Activated CD8-positive, alpha-beta T cell treated with anti-CD3 and anti-CD28 coated beads, Interleukin-2, amount 10 ng/mL, durations not matched to agents 7 days and 5 days (primary cell): ENCODE measurements at regions of chr10 and their contacts with region 1.

Region 1: DNA sequence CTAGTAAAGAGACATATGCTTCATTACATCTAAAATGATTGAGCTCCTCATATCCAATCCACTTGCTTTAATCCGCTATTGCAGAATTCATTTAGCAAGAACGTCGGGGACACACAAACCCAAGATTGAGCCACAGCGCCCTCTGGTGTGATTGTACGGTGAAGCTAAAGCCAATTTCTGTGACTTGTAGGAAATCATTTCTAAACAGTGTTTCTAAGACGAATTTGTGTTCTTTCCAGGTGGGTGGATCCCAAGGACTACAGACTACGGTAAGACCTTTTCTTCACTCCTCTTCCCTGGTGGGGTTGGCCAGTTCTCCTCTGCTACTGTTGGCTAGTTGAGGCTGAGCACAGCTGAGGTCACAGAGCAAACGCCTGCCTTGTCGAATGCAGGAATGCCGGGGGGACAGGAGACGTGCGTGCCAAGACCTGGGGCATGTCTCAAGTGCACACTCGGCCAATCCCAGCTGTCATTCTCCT is 5.2 kb downstream of the DMBT1 start:
- DNase-seq: peak; percentile 82
- ATAC-seq: no peak
- H3K4me3 Mint-ChIP-seq: no peak overlapping the region
- H3K27ac Mint-ChIP-seq: no peak overlapping the region
- H3K4me1 Mint-ChIP-seq: peaks cover 5% of the 10 kb centered on the region
- H3K27me3 Mint-ChIP-seq: peaks cover 41% of the 10 kb centered on the region

Region 2: GRCh38 chr10:122298598-122299301 is 267.0 kb before region 1 on chr10:
- CTCF ChIA-PET with region 1: interaction called, 29 read pairs
- POLR2A ChIA-PET with region 1: no interaction called
- DNase-seq: peak; percentile 74
- ATAC-seq: peak; percentile 84
- H3K4me3 Mint-ChIP-seq: peak overlapping the region; percentile 15
- H3K27ac Mint-ChIP-seq: no peak overlapping the region
- H3K4me1 Mint-ChIP-seq: peaks cover 24% of the 10 kb centered on the region
- H3K27me3 Mint-ChIP-seq: peaks cover 22% of the 10 kb centered on the region

Region 3: GRCh38 chr10:122435212-122435827 is 130.4 kb before region 1 on chr10:
- CTCF ChIA-PET with region 1: interaction called, 31 read pairs
- POLR2A ChIA-PET with region 1: no interaction called
- DNase-seq: no peak
- ATAC-seq: peak; percentile 55
- H3K4me3 Mint-ChIP-seq: no peak overlapping the region
- H3K27ac Mint-ChIP-seq: no peak overlapping the region
- H3K4me1 Mint-ChIP-seq: no peaks in the 10 kb centered on the region
- H3K27me3 Mint-ChIP-seq: peaks cover 4% of the 10 kb centered on the region

Region 4: GRCh38 chr10:122504610-122504950 is 61.2 kb before region 1 on chr10:
- CTCF ChIA-PET with region 1: interaction called, 45 read pairs
- POLR2A ChIA-PET with region 1: no interaction called
- DNase-seq: no peak
- ATAC-seq: no peak
- H3K4me3 Mint-ChIP-seq: no peak overlapping the region
- H3K27ac Mint-ChIP-seq: no peak overlapping the region
- H3K4me1 Mint-ChIP-seq: no peaks in the 10 kb centered on the region
- H3K27me3 Mint-ChIP-seq: peaks cover 15% of the 10 kb centered on the region

Region 5: DNA sequence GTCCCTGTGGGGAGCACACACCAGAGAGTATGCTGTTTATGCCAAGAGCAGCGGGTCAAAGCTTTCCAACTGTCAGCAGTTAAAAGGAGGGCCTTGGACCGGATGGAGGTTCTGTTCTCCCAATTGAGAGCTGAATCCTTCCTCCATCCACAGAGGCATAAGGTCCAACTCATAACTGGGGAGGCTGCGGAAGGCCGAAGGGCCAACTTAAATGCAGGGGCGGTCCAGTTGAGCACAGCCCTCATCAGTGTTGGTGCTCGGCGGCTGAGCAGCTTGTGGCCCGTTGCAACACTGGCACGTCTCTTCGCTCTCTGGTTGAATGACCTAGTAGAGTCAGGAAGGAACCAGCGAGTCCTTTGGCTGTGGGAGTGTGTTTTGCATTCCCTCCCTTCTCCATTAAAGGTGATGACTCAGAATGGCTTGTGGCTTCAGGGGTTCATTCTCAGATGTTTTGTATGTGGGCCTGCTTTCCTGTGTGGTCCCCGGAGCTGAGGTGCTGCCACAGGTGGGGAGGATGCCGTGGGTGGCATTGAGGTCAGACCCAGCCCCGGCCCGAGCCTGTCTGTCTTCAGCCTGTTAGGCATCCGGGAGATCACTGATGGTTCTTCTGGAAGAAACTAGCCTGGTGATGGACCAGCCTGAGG is 50.1 kb before region 1 on chr10:
- CTCF ChIA-PET with region 1: interaction called, 71 read pairs
- POLR2A ChIA-PET with region 1: interaction called, 5 read pairs
- DNase-seq: peak; percentile 81
- ATAC-seq: peak; percentile 90
- H3K4me3 Mint-ChIP-seq: no peak overlapping the region
- H3K27ac Mint-ChIP-seq: peak overlapping the region; percentile 23
- H3K4me1 Mint-ChIP-seq: peaks cover 39% of the 10 kb centered on the region
- H3K27me3 Mint-ChIP-seq: peaks cover 21% of the 10 kb centered on the region

Region 6: GRCh38 chr10:122549636-122550035 is 16.1 kb before region 1 on chr10:
- CTCF ChIA-PET with region 1: interaction called, 14 read pairs
- POLR2A ChIA-PET with region 1: no interaction called
- DNase-seq: no peak
- ATAC-seq: no peak
- H3K4me3 Mint-ChIP-seq: no peak overlapping the region
- H3K27ac Mint-ChIP-seq: no peak overlapping the region
- H3K4me1 Mint-ChIP-seq: peaks cover 11% of the 10 kb centered on the region
- H3K27me3 Mint-ChIP-seq: no peaks in the 10 kb centered on the region